ENCODE measurements at regions of chr3 and their contacts with region 1.

Region 1: DNA sequence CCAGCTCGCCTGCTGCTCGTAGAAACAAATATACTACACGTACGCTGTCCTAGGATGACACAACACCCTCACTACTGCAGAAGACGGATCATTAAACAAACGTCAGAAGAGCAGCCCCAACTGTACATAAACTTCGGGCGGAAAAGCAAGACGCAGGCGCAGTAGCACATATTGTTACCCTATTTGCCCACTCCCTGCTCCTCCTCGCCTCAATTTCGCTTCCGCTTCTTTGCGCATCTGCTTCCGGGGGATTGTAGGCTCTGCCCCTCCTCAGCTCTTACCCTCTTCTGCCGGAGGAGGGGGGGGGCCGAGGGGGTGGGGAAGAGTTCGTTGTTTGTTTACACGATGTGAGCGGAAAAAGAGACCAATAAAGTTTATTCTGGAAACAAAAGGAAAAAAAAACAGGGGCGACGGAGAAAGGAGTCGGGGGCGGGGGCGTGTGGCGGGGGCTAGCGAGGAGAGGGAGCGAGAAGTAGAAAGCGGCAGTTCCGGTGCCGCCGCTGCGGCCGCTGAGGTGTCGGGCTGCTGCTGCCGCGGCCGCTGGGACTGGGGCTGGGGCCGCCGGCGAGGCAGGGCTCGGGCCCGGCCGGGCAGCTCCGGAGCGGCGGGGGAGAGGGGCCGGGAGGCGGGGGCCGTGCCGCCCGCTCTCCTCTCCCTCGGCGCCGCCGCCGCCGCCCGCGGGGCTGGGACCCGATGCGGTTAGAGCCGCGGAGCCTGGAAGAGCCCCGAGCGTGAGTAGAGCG is at the start of gene PIK3CA:
- DNase-seq: peak; percentile 92 to 99 (median 97)
- H3K4me3 ChIP-seq: peak within 1 kb of the TSS; percentile 72 to 91
- H3K4me3 Mint-ChIP-seq: peak within 1 kb of the TSS; percentile 96 to 100 (median 98)
- H3K27ac ChIP-seq: peak within 1 kb of the TSS; percentile 89
- H3K27ac Mint-ChIP-seq: peak within 1 kb of the TSS in 6 of 7 donors; percentile 96 to 99 (median 98)
- H3K4me1 ChIP-seq: peaks cover 40% of the 10 kb centered on the region
- H3K4me1 Mint-ChIP-seq: peaks cover 26 to 41% (median 31%) of the 10 kb centered on the region in 4 donors
- H3K27me3 ChIP-seq: no peaks in the 10 kb centered on the region
- H3K27me3 Mint-ChIP-seq: no peaks in the 10 kb centered on the region
- total RNA-seq, gene PIK3CA: 45.5 to 47.2 TPM

Region 2: DNA sequence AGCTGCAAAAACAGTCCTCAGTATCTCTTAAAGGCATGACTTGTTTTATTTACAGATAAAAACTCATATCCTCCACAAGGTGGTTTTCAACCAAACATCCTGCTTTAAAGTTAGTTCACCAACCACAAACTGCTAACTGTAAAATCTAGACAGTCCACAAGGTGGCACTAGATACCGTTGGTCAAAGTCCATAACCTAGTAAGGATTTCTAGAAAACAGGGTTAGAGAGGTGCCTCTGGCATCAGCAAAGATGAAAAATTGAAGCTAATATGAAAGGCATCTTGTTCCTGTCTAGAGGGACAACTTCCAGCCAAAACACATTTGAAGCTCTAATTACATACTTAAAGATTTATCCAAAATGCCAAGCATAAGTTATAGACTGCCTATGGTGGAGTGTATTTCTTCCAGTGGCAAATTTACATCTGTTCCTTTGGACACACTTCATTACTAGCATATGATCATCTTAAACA is 132.5 kb before region 1 on chr3:
- CTCF ChIA-PET with region 1: interaction called, 4 read pairs
- POLR2A ChIA-PET with region 1: interaction called, 7 read pairs
- intact Hi-C with region 1: loop called (anchors 1 kb)
- DNase-seq: peak; percentile 79 to 82 (median 79)
- H3K4me3 ChIP-seq: no peak overlapping the region
- H3K4me3 Mint-ChIP-seq: peak overlapping the region in 2 of 8 donors; percentile 26 to 33
- H3K27ac ChIP-seq: no peak overlapping the region
- H3K27ac Mint-ChIP-seq: peak overlapping the region in 5 of 7 donors; percentile 4 to 66 (median 53)
- H3K4me1 ChIP-seq: peaks cover 27% of the 10 kb centered on the region
- H3K4me1 Mint-ChIP-seq: peaks cover 19 to 34% (median 31%) of the 10 kb centered on the region in 4 donors
- H3K27me3 ChIP-seq: no peaks in the 10 kb centered on the region
- H3K27me3 Mint-ChIP-seq: peaks cover 0 to 1% of the 10 kb centered on the region in 2 donors

Region 3: DNA sequence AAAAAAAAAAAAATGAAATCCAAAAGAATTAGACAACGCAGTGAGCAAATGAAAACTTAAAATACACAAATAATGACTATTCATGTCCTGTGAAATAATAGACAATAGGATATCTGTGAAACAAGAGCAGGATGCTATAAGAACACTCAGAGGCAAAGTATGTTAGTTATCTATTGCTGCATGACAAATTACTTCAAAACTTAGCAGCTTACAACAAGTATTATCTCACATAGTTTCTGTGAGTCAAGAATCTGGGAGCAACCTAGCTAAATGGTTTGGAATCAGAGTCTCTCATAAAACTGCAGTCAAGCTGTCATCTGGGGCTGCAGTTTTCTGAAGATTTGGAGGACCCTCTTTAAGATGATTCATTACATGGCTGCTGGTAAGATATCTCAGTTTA is 40.0 kb before region 1 on chr3:
- CTCF ChIA-PET with region 1: interaction called, 4 read pairs
- POLR2A ChIA-PET with region 1: interaction called, 3 read pairs
- intact Hi-C with region 1: loop called (anchors 2 kb)
- DNase-seq: no peak
- H3K4me3 ChIP-seq: no peak overlapping the region
- H3K4me3 Mint-ChIP-seq: no peak overlapping the region
- H3K27ac ChIP-seq: no peak overlapping the region
- H3K27ac Mint-ChIP-seq: no peak overlapping the region
- H3K4me1 ChIP-seq: no peaks in the 10 kb centered on the region
- H3K4me1 Mint-ChIP-seq: peaks cover 0 to 2% (median 1%) of the 10 kb centered on the region in 4 donors
- H3K27me3 ChIP-seq: peaks cover 4% of the 10 kb centered on the region
- H3K27me3 Mint-ChIP-seq: peaks cover 4 to 7% of the 10 kb centered on the region in 2 donors

Region 4: GRCh38 chr3:179260949-179261765 is 113.1 kb after region 1 on chr3:
- CTCF ChIA-PET with region 1: interaction called, 3 read pairs
- POLR2A ChIA-PET with region 1: interaction called, 7 read pairs
- intact Hi-C with region 1: loop called (anchors 1 kb)
- DNase-seq: peak; percentile 67 to 71 (median 69)
- H3K4me3 ChIP-seq: peak overlapping the region in 1 of 2 donors; percentile 52
- H3K4me3 Mint-ChIP-seq: peak overlapping the region; percentile 76 to 91 (median 86)
- H3K27ac ChIP-seq: no peak overlapping the region
- H3K27ac Mint-ChIP-seq: peak overlapping the region; percentile 54 to 82 (median 79)
- H3K4me1 ChIP-seq: peaks cover 9% of the 10 kb centered on the region
- H3K4me1 Mint-ChIP-seq: peaks cover 20 to 32% (median 25%) of the 10 kb centered on the region in 4 donors
- H3K27me3 ChIP-seq: no peaks in the 10 kb centered on the region
- H3K27me3 Mint-ChIP-seq: no peaks in the 10 kb centered on the region

Region 5: DNA sequence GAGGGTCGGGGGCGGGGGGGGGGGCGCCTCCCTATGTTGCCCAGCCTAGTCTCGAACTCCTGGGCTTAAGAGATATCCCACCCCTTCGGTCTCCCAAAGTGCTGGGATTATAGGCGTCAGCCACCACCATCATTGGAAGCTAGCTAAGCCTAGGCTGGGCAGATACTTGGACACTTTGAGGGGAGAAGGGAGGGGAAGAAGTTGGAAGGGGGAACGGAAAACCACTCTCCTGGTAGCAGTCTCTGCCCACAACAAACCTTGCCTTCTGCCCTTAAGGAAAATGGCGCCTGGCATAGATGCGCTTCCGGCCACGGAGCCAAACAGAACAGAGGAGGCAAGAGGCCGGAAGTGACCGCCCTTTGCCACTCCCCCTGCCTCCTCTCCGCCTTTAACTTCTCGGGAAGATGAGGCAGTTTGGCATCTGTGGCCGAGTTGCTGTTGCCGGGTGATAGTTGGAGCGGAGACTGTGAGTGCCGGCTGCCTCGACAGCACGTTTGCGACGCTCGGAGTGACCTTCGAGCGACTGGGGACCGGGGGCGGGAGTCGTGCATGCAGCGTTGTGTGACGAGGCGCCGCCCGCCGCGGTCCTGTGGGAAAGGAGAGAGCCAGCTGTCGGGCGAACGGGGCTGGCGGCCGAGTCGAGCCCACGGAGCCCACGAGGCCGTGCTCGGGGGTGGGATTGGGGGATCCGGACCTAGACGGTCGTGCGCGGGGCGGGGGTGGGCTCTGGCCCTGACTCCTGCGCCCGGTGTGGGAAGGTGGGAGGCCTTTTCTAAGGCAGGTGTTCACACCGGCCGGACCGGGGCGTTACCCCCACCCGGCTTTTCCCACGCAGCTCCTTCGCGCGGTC is 199.5 kb after region 1 on chr3 and contains the start of gene MFN1:
- CTCF ChIA-PET with region 1: no interaction called
- POLR2A ChIA-PET with region 1: interaction called, 21 read pairs
- intact Hi-C with region 1: loop called (anchors 1 kb)
- DNase-seq: peak; percentile 86 to 94 (median 89)
- H3K4me3 ChIP-seq: peak within 1 kb of the TSS; percentile 92 to 97
- H3K4me3 Mint-ChIP-seq: peak within 1 kb of the TSS; percentile 93 to 100 (median 98)
- H3K27ac ChIP-seq: peak within 1 kb of the TSS; percentile 72
- H3K27ac Mint-ChIP-seq: peak within 1 kb of the TSS; percentile 86 to 99 (median 95)
- H3K4me1 ChIP-seq: peaks cover 21% of the 10 kb centered on the region
- H3K4me1 Mint-ChIP-seq: peaks cover 16 to 31% (median 24%) of the 10 kb centered on the region in 4 donors
- H3K27me3 ChIP-seq: no peaks in the 10 kb centered on the region
- H3K27me3 Mint-ChIP-seq: no peaks in the 10 kb centered on the region
- total RNA-seq, gene MFN1: 52.0 to 58.3 TPM

Region 6: GRCh38 chr3:179486806-179487205 is 338.8 kb after region 1 on chr3:
- CTCF ChIA-PET with region 1: no interaction called
- POLR2A ChIA-PET with region 1: no interaction called
- intact Hi-C with region 1: no loop called
- DNase-seq: no peak
- H3K4me3 ChIP-seq: no peak overlapping the region
- H3K4me3 Mint-ChIP-seq: no peak overlapping the region
- H3K27ac ChIP-seq: no peak overlapping the region
- H3K27ac Mint-ChIP-seq: no peak overlapping the region
- H3K4me1 ChIP-seq: no peaks in the 10 kb centered on the region
- H3K4me1 Mint-ChIP-seq: no peaks in the 10 kb centered on the region
- H3K27me3 ChIP-seq: no peaks in the 10 kb centered on the region
- H3K27me3 Mint-ChIP-seq: peaks cover 4 to 9% of the 10 kb centered on the region in 2 donors

Region 7: GRCh38 chr3:179653096-179653797 is 505.2 kb after region 1 on chr3:
- CTCF ChIA-PET with region 1: no interaction called
- POLR2A ChIA-PET with region 1: interaction called, 3 read pairs
- intact Hi-C with region 1: loop called (anchors 2 kb)
- DNase-seq: peak; percentile 64 to 72 (median 71)
- H3K4me3 ChIP-seq: peak overlapping the region; percentile 77 to 82
- H3K4me3 Mint-ChIP-seq: peak overlapping the region; percentile 87 to 97 (median 96)
- H3K27ac ChIP-seq: peak overlapping the region; percentile 61
- H3K27ac Mint-ChIP-seq: peak overlapping the region; percentile 87 to 96 (median 91)
- H3K4me1 ChIP-seq: peaks cover 21% of the 10 kb centered on the region
- H3K4me1 Mint-ChIP-seq: peaks cover 26 to 44% (median 34%) of the 10 kb centered on the region in 4 donors
- H3K27me3 ChIP-seq: no peaks in the 10 kb centered on the region
- H3K27me3 Mint-ChIP-seq: no peaks in the 10 kb centered on the region

Measured in CD4-positive, alpha-beta memory T cell (primary cell).